ENCODE measurements at regions of chr19 and their contacts with region 1.

Region 1: DNA sequence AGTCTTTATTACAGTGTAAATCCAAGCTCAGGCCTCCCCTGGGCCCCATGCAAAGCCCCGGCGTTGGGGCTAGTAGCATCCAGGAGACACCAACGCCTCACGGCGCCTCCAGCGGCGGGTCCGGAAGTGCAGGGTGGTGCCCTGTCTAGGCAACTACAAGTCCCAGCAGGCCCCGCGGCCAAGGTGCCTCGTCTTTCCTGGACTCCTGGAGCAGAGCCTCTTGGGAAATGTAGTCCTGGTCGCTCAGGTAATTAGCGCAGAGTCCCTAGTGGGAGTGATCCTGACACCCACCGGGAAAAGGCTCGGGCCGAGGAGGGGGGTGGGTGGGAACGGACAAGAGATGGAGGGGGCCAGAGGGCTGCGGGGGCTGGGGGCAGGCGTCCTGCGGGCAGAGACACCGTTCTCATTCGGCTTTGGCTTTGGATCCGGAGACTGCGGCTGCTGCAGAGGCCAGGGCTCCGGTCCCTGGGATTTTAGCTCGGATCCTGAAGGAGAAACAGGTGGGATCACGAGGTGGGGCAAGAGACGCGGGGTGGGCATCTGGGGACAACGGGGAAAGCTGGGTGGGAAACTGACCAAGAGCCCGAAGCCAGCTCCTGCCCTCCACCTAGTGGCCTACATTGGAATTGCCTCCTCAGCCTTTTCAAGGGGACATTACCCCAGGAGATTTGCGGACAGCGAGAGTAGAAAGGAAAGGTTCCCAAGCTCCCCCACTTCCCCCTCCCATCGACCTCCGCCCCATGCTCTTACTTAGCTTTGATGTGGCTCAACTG is 11.4 kb downstream of the RTN2 start:
- DNase-seq: peak; percentile 92 to 99 (median 96)
- ATAC-seq: peak; percentile 97 to 99
- H3K4me3 Mint-ChIP-seq: peak overlapping the region; percentile 89 to 97 (median 92)
- H3K27ac Mint-ChIP-seq: peak overlapping the region in 9 of 10 donors; percentile 6 to 92 (median 83)
- H3K4me1 Mint-ChIP-seq: peaks cover 0 to 12% (median 8%) of the 10 kb centered on the region in 4 donors
- H3K27me3 Mint-ChIP-seq: peaks cover 0 to 5% (median 0%) of the 10 kb centered on the region in 5 donors

Region 2: DNA sequence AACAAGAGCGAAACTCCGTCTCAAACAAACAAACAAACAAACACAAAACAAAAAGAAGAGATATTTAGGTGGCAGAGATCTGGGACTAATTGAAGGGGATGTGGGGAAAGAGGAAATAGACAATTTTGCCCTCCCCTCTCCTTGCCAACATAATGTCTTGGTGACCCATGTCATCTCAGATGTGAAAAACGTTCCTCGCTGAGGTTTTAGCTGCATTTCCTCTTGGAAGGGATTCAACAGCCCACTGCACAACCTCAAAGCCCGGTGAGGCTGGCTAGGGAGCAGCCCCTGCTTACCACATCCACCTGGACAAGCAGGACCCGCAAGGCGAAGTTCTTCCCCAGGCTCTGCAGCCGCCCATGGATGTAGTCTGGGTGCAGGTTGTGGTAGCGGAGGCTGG is 66.7 kb before region 1 on chr19:
- POLR2A ChIA-PET with region 1: no interaction called
- DNase-seq: no peak
- ATAC-seq: no peak
- H3K4me3 Mint-ChIP-seq: peak overlapping the region in 4 of 10 donors; percentile 11 to 63 (median 36)
- H3K27ac Mint-ChIP-seq: peak overlapping the region in 7 of 10 donors; percentile 59 to 93 (median 81)
- H3K4me1 Mint-ChIP-seq: peaks cover 21 to 45% (median 41%) of the 10 kb centered on the region in 4 donors
- H3K27me3 Mint-ChIP-seq: no peaks in the 10 kb centered on the region

Region 3: GRCh38 chr19:45439569-45440254 is 45.8 kb before region 1 on chr19:
- POLR2A ChIA-PET with region 1: interaction called, 133 read pairs
- DNase-seq: peak; percentile 73 to 97 (median 86)
- ATAC-seq: peak; percentile 59 to 66
- H3K4me3 Mint-ChIP-seq: peak overlapping the region; percentile 58 to 84 (median 76)
- H3K27ac Mint-ChIP-seq: peak overlapping the region in 6 of 10 donors; percentile 81 to 91 (median 89)
- H3K4me1 Mint-ChIP-seq: peaks cover 18 to 40% (median 35%) of the 10 kb centered on the region in 4 donors
- H3K27me3 Mint-ChIP-seq: no peaks in the 10 kb centered on the region

Region 4: DNA sequence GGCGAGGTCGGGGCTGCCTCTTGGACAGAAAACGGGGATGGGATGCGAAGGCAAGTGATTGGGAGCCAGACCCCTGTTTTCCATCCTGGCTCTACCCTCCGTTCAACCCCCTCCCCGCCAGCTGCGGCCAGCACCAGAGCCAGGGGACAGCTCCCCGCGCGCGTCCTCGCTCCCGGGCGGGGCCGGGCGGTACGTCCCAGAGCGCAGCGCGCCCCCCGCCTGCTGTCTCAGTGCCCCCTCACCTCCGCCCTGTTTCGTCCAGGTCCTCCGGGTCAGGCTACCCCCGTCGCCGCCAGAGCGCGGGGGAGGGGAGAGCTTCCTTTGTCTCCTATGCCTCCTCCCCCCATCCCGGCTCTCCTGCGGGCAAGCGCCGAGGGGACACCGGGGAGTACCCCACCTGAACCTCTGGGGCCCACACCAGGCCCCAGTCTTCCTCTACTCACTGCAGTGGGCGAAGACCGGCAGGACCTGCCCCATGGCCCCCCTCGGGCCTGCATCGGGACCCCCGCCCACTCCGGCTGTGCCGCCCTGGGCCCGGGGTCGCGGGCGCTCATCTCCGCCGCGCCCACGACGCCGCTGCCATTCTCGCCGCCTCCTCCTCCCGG is 11.0 kb after region 1 on chr19:
- POLR2A ChIA-PET with region 1: interaction called, 12 read pairs
- DNase-seq: peak in 7 of 10 donors; percentile 43 to 72 (median 55)
- ATAC-seq: peak; percentile 16 to 26
- H3K4me3 Mint-ChIP-seq: peak overlapping the region; percentile 64 to 89 (median 78)
- H3K27ac Mint-ChIP-seq: peak overlapping the region in 2 of 10 donors; percentile 24 to 63
- H3K4me1 Mint-ChIP-seq: peaks cover 30 to 63% (median 46%) of the 10 kb centered on the region in 4 donors
- H3K27me3 Mint-ChIP-seq: peaks cover 7 to 27% (median 20%) of the 10 kb centered on the region in 5 donors

Measured in naive thymus-derived CD8-positive, alpha-beta T cell (primary cell).